ENCODE measurements at regions of chr1 and their contacts with region 1.

Region 1: GRCh38 chr1:174159252-174160108 is at the start of gene RABGAP1L:
- DNase-seq: peak; percentile 96 to 97 (median 96)
- ATAC-seq: peak; percentile 94 to 99 (median 98)
- H3K4me3 ChIP-seq: peak within 1 kb of the TSS; percentile 78 to 99 (median 92)
- H3K27ac ChIP-seq: peak within 1 kb of the TSS; percentile 81 to 97 (median 93)
- H3K4me1 ChIP-seq: peaks cover 0 to 29% (median 16%) of the 10 kb centered on the region in 12 donors
- H3K27me3 ChIP-seq: no peaks in the 10 kb centered on the region
- CTCF ChIP-seq: peak in 1 of 12 donors; percentile 25
- POLR2A ChIP-seq: peak; percentile 36 to 94
- total RNA-seq, gene RABGAP1L: 66.8 to 195 (median 98.4) TPM

Region 2: DNA sequence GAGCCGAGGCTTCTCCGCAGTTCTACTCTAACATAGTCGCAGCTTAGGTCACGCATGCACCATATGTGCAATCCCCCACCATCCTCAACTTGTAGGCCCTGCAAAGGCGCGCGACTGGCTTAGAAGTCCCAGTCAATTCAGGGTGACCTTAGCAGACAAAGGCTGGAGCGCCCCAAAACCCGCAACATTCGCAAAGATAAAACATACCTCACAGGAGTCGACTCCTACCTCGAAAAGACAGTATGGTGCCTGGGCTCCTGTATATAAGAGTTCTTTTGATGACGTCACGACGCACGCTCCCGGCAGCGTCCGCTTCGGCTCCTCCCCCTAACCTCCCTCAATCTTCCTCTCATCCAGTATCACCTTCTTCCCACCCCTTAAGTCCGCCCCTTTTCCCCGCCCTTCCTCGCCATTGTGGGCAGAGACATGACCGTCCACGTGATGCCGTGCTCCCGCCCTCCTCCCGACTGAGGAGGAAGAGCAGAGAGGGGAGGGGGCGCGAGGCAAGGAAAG is 291.7 kb before region 1 on chr1 and contains the start of gene GAS5:
- intact Hi-C with region 1: loop called in 1 of 10 experiments (anchors 10 kb)
- DNase-seq: peak; percentile 99 to 100 (median 99)
- ATAC-seq: peak; percentile 94 to 97 (median 96)
- H3K4me3 ChIP-seq: peak within 1 kb of the TSS; percentile 47 to 95 (median 85)
- H3K27ac ChIP-seq: peak within 1 kb of the TSS; percentile 94 to 99 (median 98)
- H3K4me1 ChIP-seq: peaks cover 8 to 70% (median 48%) of the 10 kb centered on the region in 12 donors
- H3K27me3 ChIP-seq: no peaks in the 10 kb centered on the region
- CTCF ChIP-seq: no peak
- POLR2A ChIP-seq: peak; percentile 94 to 99
- total RNA-seq, gene GAS5: 30.4 to 103 (median 43.6) TPM

Region 3: DNA sequence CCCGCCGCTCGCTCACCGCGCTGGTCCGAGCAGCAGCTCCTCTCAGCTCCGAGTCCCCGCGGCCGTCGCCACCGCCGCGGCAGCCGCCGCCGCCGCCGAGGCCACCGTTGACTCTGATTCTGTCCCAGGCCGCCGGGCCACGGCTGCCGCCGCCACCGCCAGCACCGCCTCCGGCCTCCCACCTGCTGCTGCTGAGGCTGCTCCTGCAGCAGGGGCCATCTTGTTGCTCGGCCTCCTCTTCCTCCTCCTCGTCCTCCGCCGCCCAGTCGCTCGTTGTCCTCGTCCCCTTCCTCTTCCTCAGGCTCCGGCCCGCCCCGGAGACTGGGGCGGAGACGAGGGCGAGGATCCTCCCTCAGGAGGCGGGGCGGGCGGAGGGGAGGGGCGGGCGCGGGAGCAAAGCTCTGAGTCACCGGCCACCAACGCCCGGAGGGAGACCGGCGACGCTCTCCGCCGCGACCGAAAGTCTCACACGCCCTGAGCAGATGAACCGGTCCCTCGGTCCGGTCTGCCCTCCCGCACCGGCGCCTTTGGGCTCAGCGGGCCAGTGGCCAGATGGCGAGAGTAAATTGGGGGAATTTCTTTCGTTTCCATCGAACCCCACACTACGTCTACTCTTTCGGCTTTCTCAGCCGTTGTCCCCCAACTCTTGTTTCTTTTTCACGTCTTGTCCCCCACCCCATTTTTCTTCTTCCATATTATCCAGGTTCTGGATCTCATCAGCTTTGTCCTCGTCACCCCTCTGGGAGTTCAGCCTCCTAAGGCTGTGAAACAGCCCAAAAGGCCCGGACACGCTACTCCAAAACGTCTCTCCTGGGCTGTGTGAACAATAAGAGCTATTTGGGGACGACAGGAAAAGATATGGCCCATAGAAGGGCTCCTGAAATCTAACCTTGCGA is 137.2 kb before region 1 on chr1 and contains the start of gene RC3H1:
- intact Hi-C with region 1: loop called in 4 of 10 experiments (anchors 5 to 10 kb)
- DNase-seq: peak; percentile 93 to 97 (median 94)
- ATAC-seq: peak; percentile 95 to 99 (median 98)
- H3K4me3 ChIP-seq: peak within 1 kb of the TSS; percentile 72 to 94 (median 85)
- H3K27ac ChIP-seq: peak within 1 kb of the TSS; percentile 84 to 99 (median 96)
- H3K4me1 ChIP-seq: peaks cover 5 to 52% (median 46%) of the 10 kb centered on the region in 12 donors
- H3K27me3 ChIP-seq: no peaks in the 10 kb centered on the region
- CTCF ChIP-seq: no peak
- POLR2A ChIP-seq: peak; percentile 86 to 99
- total RNA-seq, gene RC3H1: 14.7 to 32.0 (median 25.5) TPM

Region 4: DNA sequence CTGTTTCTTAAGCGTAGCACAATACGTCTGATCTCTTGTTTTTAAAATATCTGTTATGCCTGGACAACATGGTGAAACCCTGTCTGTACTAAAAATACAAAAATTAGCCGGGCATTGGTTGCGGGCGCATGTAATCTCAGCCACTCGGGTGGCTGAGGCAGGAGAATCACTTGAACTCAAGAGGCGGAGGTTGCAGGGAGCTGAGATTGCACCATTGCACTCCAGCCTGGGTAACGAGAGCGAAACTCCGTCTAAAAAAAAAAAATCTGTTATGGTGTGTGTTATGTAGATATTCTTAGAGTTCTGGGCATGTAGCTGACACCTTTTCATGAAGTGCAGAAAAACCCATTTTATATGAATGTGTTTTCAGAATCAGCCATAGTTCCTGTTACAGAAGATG is 38.1 kb after region 1 on chr1:
- intact Hi-C with region 1: loop called in 1 of 10 experiments (anchors 5 kb)
- DNase-seq: peak in 3 of 5 donors; percentile 18 to 46 (median 34)
- ATAC-seq: peak in 3 of 4 donors; percentile 39 to 56 (median 49)
- H3K4me3 ChIP-seq: peak overlapping the region in 2 of 12 donors; percentile 4 to 19
- H3K27ac ChIP-seq: peak overlapping the region in 7 of 12 donors; percentile 17 to 64 (median 30)
- H3K4me1 ChIP-seq: peaks cover 0 to 23% (median 5%) of the 10 kb centered on the region in 12 donors
- H3K27me3 ChIP-seq: no peaks in the 10 kb centered on the region
- CTCF ChIP-seq: no peak
- POLR2A ChIP-seq: no peak

Region 5: GRCh38 chr1:174217787-174218574 is 58.5 kb after region 1 on chr1:
- intact Hi-C with region 1: loop called in 2 of 10 experiments (anchors 5 kb)
- DNase-seq: no peak
- ATAC-seq: peak in 2 of 4 donors; percentile 62 to 70
- H3K4me3 ChIP-seq: no peak overlapping the region
- H3K27ac ChIP-seq: peak overlapping the region in 2 of 12 donors; percentile 5 to 34
- H3K4me1 ChIP-seq: peaks cover 0 to 19% (median 3%) of the 10 kb centered on the region in 12 donors
- H3K27me3 ChIP-seq: no peaks in the 10 kb centered on the region
- CTCF ChIP-seq: peak; percentile 62 to 86 (median 76)
- POLR2A ChIP-seq: no peak

Region 6: GRCh38 chr1:174243451-174244000 is 84.0 kb after region 1 on chr1:
- intact Hi-C with region 1: no loop called
- DNase-seq: no peak
- ATAC-seq: peak in 3 of 4 donors; percentile 53 to 75 (median 64)
- H3K4me3 ChIP-seq: no peak overlapping the region
- H3K27ac ChIP-seq: peak overlapping the region in 1 of 12 donors; percentile 17
- H3K4me1 ChIP-seq: peaks cover 0 to 29% (median 0%) of the 10 kb centered on the region in 12 donors
- H3K27me3 ChIP-seq: no peaks in the 10 kb centered on the region
- CTCF ChIP-seq: no peak
- POLR2A ChIP-seq: no peak

Region 7: DNA sequence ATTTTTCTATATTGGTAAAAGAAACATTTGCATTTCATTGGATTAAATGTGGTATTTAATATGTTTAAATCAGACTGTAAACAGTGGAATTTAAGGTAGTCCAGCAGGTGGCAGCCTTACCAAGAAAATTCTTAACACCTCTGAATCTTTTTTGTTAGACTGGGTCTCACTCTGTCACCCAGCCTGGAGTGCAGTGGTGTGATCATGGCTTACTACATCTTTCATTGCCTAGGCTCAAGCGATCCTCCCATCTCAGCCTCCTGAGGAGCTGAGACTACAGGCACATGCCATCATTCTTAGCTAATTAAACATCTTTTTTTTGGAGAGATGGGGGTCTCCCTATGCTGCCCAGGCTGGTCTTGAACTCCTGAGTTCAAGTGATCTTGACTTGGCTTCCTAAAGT is 98.7 kb after region 1 on chr1:
- intact Hi-C with region 1: no loop called
- DNase-seq: no peak
- ATAC-seq: peak in 3 of 4 donors; percentile 31 to 54 (median 39)
- H3K4me3 ChIP-seq: no peak overlapping the region
- H3K27ac ChIP-seq: no peak overlapping the region
- H3K4me1 ChIP-seq: peaks cover 0 to 7% (median 0%) of the 10 kb centered on the region in 12 donors
- H3K27me3 ChIP-seq: no peaks in the 10 kb centered on the region
- CTCF ChIP-seq: peak; percentile 17 to 64 (median 54)
- POLR2A ChIP-seq: no peak

Measured in heart left ventricle (tissue), 16 donors.